Left cardiac atrium (tissue), 4 donors: ENCODE measurements at regions of chr16 and their contacts with region 1.

Region 1: GRCh38 chr16:30407102-30407803 is at the start of gene ZNF771:
- DNase-seq: peak; percentile 96
- ATAC-seq: peak; percentile 97
- total RNA-seq, gene ZNF771: 5.9 to 6.2 TPM

Region 2: GRCh38 chr16:30355144-30355894 is 51.9 kb before region 1 on chr16 and contains the start of gene CD2BP2:
- intact Hi-C with region 1: loop called in 1 of 2 experiments (anchors 10 kb)
- DNase-seq: peak; percentile 98
- ATAC-seq: peak; percentile 91 to 93
- total RNA-seq, gene CD2BP2: 35.5 to 47.8 TPM

Region 3: GRCh38 chr16:30370444-30371247 is 36.6 kb before region 1 on chr16 and contains the start of gene TBC1D10B:
- intact Hi-C with region 1: loop called in 1 of 2 experiments (anchors 5 kb)
- DNase-seq: peak; percentile 98
- ATAC-seq: peak; percentile 89 to 95
- total RNA-seq, gene TBC1D10B: 23.4 to 30.5 TPM